Activated naive CD4-positive, alpha-beta T cell treated with anti-CD3 and anti-CD28 coated beads, Interleukin-2, amount 10 ng/mL, durations not matched to agents 7 days and 5 days (primary cell): ENCODE measurements at regions of chr2 and their contacts with region 1.

Region 1: GRCh38 chr2:172931918-172932520 is 143.6 kb upstream of the MAP3K20 start:
- DNase-seq: peak; percentile 75
- H3K4me3 Mint-ChIP-seq: no peak overlapping the region
- H3K27ac Mint-ChIP-seq: no peak overlapping the region
- H3K4me1 Mint-ChIP-seq: peaks cover 11% of the 10 kb centered on the region
- H3K27me3 Mint-ChIP-seq: peaks cover 11% of the 10 kb centered on the region

Region 2: DNA sequence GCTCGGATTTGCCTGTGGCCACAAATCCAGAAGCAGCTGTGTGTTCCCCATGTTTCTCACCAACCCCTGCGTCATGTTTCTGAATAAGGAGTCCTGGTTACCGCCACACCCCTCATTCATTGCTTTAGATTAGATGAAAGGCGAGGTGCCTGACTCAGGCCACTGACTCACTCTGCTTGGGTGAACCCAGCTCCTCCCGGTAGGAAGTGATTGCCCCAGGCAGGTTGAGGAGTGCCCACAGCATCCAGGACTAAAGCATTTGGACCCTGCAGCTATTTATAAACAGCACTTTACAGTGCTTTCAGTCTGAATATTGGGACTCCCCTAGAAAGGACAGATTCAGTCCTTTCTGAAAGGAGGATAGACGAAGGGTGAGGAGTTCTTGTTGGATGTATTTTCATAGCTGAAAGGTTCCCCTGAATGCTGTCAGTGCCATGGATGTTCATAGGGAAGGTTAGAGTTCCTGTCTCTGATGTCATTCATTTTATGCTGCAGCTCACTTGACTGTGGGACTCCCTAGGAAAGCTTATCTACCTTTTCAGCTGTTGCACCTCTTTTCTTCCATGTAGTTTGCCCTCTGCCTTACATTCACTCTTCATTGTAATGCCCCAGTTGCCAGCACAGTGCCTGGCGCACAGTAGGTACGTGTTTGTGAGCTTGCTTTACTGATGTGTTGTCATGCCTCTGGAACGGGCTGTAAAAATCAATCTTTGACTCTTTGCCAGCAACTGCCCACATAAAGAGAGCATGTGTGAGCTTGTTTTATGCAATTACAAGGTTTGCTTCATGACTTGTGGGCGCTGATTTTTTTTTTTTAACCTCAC is 489.7 kb before region 1 on chr2:
- CTCF ChIA-PET with region 1: no interaction called
- DNase-seq: peak; percentile 60
- H3K4me3 Mint-ChIP-seq: peak overlapping the region; percentile 62
- H3K27ac Mint-ChIP-seq: peak overlapping the region; percentile 81
- H3K4me1 Mint-ChIP-seq: peaks cover 48% of the 10 kb centered on the region
- H3K27me3 Mint-ChIP-seq: no peaks in the 10 kb centered on the region

Region 3: GRCh38 chr2:172806493-172806892 is 125.5 kb before region 1 on chr2:
- CTCF ChIA-PET with region 1: interaction called, 56 read pairs
- DNase-seq: no peak
- H3K4me3 Mint-ChIP-seq: no peak overlapping the region
- H3K27ac Mint-ChIP-seq: no peak overlapping the region
- H3K4me1 Mint-ChIP-seq: no peaks in the 10 kb centered on the region
- H3K27me3 Mint-ChIP-seq: peaks cover 13% of the 10 kb centered on the region

Region 4: DNA sequence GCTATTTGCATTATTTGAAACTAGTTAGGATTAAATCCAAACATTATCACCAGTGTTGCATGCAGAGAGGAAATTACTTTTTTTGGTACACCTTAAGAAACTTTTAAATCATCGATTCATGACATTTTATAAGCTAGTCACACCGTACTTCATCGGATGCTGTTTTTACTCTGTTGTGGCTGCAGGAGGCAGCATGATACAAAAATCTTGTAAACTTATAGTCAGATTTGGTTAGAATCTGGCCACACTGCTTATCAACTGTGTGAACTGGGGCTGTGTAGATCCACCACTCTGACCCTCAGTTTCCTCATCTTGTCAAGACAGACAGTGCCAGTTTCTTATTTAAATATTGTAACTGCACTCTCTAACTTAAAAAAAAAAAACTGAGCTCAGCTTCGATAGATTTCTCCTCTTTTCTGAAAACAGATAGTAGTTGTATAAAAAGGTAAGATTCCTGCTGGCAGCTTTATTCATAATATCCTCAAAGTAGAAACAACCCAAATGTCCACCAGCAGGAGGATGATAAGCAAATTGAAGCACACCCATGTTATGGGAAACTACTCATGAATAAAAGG is 118.6 kb before region 1 on chr2:
- CTCF ChIA-PET with region 1: interaction called, 56 read pairs
- DNase-seq: no peak
- H3K4me3 Mint-ChIP-seq: no peak overlapping the region
- H3K27ac Mint-ChIP-seq: no peak overlapping the region
- H3K4me1 Mint-ChIP-seq: no peaks in the 10 kb centered on the region
- H3K27me3 Mint-ChIP-seq: peaks cover 13% of the 10 kb centered on the region

Region 5: DNA sequence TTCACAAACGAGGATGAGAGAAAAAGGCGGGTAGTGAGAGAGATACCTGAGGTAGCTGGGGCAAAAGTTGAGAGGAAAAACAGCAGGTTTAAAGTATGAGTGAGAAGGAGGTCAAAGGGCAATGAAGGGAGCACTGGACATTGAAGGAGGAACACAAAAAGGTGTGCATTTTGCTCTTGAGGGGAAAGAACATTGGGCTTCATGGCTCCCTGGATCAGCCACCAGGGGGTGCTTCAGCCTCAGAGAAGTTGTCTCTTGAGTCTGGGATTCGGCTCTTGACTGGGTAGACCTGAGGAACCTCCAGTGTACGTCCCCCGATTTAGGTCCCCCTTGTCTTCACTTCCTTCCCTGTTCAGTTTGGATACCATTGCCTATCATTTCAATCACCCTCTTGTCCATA is 67.8 kb before region 1 on chr2:
- CTCF ChIA-PET with region 1: interaction called, 38 read pairs
- DNase-seq: peak; percentile 57
- H3K4me3 Mint-ChIP-seq: no peak overlapping the region
- H3K27ac Mint-ChIP-seq: no peak overlapping the region
- H3K4me1 Mint-ChIP-seq: no peaks in the 10 kb centered on the region
- H3K27me3 Mint-ChIP-seq: peaks cover 9% of the 10 kb centered on the region